ENCODE measurements at regions of chr19 and their contacts with region 1.

Region 1: DNA sequence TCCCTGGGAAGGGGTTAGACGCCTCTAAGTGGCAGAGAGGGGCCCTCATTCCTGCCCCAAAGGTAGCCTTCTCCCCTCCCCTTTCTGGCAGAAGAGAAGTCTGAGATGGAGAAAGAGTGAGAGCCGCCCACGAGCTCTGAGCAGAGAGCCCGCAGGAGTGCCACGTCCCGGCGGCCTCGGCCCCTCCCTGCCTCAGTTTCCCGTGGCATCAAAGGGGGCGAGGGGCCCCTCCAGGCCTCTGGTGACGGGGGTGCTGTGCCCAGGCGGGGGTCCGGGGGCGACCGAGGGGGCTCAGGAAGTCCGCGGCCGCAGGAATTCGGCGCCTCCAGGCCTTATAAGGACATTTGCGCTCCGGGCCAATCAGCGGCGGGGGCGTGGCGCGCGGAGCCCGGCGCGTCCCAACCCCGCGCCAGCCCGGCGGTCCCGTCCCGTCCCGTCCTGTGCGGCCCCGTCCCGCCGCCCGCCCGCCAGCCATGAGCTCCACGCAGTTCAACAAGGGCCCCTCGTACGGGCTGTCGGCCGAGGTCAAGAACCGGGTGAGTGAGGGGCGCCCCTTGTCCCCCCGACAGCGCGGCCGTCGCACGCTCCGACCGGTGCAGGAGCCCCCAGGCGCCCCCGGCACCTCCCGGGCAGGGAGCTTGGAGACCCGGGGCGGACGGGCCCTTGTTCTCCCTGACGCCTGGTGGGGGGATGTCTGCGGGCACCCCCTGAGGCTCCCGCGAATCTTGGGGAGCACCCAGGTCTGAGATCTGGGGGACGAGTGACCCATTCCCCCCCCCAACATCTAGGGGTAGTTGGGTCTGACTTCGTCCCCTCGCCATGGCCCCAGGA is at the start of gene CNN2:
- DNase-seq: peak; percentile 79
- ATAC-seq: peak; percentile 47
- H3K4me3 Mint-ChIP-seq: peak within 1 kb of the TSS; percentile 89
- H3K27ac Mint-ChIP-seq: peak within 1 kb of the TSS; percentile 90
- H3K4me1 Mint-ChIP-seq: peaks cover 31% of the 10 kb centered on the region
- H3K27me3 Mint-ChIP-seq: no peaks in the 10 kb centered on the region
- CTCF ChIP-seq: no peak
- total RNA-seq, gene CNN2: 97.4 to 98.3 TPM

Region 2: GRCh38 chr19:1039646-1040475 is 13.5 kb after region 1 on chr19 and contains the start of gene ABCA7:
- CTCF ChIA-PET with region 1: interaction called, 10 read pairs
- POLR2A ChIA-PET with region 1: interaction called, 68 read pairs
- intact Hi-C with region 1: no loop called
- DNase-seq: peak; percentile 99
- ATAC-seq: peak; percentile 96
- H3K4me3 Mint-ChIP-seq: peak within 1 kb of the TSS; percentile 91
- H3K27ac Mint-ChIP-seq: peak within 1 kb of the TSS; percentile 82
- H3K4me1 Mint-ChIP-seq: peaks cover 43% of the 10 kb centered on the region
- H3K27me3 Mint-ChIP-seq: no peaks in the 10 kb centered on the region
- CTCF ChIP-seq: no peak
- total RNA-seq, gene ABCA7: 14.0 to 14.6 TPM

Region 3: GRCh38 chr19:1074544-1075283 is 48.3 kb after region 1 on chr19:
- CTCF ChIA-PET with region 1: interaction called, 5 read pairs
- POLR2A ChIA-PET with region 1: interaction called, 7 read pairs
- intact Hi-C with region 1: loop called (anchors 5 kb)
- DNase-seq: peak; percentile 92
- ATAC-seq: peak; percentile 32
- H3K4me3 Mint-ChIP-seq: peak overlapping the region; percentile 24
- H3K27ac Mint-ChIP-seq: peak overlapping the region; percentile 83
- H3K4me1 Mint-ChIP-seq: peaks cover 58% of the 10 kb centered on the region
- H3K27me3 Mint-ChIP-seq: no peaks in the 10 kb centered on the region
- CTCF ChIP-seq: no peak

Region 4: DNA sequence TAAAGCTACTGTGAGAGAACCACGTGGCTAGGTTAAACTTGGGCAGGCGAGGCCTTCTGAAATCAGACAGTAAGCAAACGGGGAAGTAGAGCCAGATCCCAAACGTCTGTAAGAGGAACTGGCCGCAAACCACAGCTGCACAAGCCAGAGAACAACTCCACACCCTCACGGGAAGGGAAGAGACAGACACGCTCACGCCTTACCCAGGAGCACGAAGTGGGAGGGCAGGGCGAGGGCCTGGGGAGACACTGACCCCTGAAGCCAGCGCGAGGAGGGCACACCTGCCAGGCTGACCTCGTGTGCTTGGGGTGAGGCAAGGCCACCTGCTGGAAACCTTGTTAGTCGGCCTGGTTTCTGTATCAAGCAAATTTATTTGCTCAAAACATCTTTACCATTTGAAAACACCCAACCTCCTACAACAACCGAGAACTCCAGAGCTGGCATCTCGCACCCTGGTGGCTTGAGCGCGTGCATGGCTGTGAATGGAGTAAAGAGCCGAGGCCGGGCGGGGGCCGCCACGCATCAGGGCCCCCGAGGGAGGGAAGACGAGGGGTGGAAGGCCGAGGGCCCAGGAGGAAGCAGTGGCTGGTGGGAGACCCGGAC is 61.5 kb after region 1 on chr19:
- CTCF ChIA-PET with region 1: no interaction called
- POLR2A ChIA-PET with region 1: interaction called, 55 read pairs
- intact Hi-C with region 1: no loop called
- DNase-seq: peak; percentile 55
- ATAC-seq: peak; percentile 15
- H3K4me3 Mint-ChIP-seq: peak overlapping the region; percentile 2
- H3K27ac Mint-ChIP-seq: peak overlapping the region; percentile 84
- H3K4me1 Mint-ChIP-seq: peaks cover 58% of the 10 kb centered on the region
- H3K27me3 Mint-ChIP-seq: no peaks in the 10 kb centered on the region
- CTCF ChIP-seq: no peak